ENCODE measurements at regions of chr14 and their contacts with region 1.

Region 1: GRCh38 chr14:68795597-68796417 is 2.9 kb upstream of the ZFP36L1 start:
- DNase-seq: peak; percentile 88 to 93 (median 89)
- H3K4me3 ChIP-seq: peak overlapping the region; percentile 88 to 98
- H3K4me3 Mint-ChIP-seq: peak overlapping the region; percentile 88 to 100 (median 94)
- H3K27ac ChIP-seq: peak overlapping the region; percentile 99
- H3K27ac Mint-ChIP-seq: peak overlapping the region; percentile 98 to 100 (median 99)
- H3K4me1 ChIP-seq: peaks cover 20% of the 10 kb centered on the region
- H3K4me1 Mint-ChIP-seq: peaks cover 22 to 71% (median 29%) of the 10 kb centered on the region in 4 donors
- H3K27me3 ChIP-seq: no peaks in the 10 kb centered on the region
- H3K27me3 Mint-ChIP-seq: peaks cover 0 to 8% of the 10 kb centered on the region in 2 donors

Region 2: GRCh38 chr14:68047906-68048305 is 747.9 kb before region 1 on chr14:
- CTCF ChIA-PET with region 1: no interaction called
- POLR2A ChIA-PET with region 1: no interaction called
- intact Hi-C with region 1: no loop called
- DNase-seq: no peak
- H3K4me3 ChIP-seq: no peak overlapping the region
- H3K4me3 Mint-ChIP-seq: no peak overlapping the region
- H3K27ac ChIP-seq: no peak overlapping the region
- H3K27ac Mint-ChIP-seq: no peak overlapping the region
- H3K4me1 ChIP-seq: no peaks in the 10 kb centered on the region
- H3K4me1 Mint-ChIP-seq: no peaks in the 10 kb centered on the region
- H3K27me3 ChIP-seq: no peaks in the 10 kb centered on the region
- H3K27me3 Mint-ChIP-seq: no peaks in the 10 kb centered on the region

Region 3: DNA sequence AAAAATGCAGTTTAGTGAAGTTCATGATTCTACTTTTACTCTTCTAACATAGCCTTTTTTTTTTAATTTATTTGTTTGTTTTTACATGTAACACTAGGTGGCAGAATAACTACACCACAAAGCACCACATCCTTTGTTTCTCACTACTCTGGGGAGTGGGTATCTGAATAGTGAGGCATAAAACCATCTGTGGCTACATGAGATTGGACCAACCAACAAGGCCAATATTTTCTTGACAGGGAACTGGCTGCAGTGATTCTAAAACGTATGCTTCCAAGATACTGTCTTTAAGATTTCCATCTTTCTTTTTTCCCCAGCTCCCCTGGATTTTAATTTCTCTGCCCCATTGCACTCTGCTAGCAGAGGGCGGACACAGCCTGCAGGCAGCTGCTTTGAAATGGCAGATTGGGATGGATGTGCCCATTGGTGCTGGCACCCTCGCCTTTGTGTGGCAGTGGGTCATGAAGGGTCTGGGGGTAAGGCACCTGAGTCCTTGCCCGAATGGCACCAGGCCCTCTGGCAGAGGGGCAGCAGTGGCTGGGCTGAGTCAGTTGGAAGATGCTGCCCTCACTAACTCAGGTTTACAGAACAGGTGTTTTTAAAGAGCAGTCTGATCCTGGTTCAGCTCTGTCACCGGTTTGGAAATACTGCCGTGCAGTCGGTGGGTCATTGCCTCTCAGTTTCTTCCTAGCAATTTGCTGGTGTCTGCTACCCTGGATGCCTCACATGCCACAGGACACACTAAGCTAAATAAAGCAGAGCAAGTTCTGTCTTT is 547.1 kb before region 1 on chr14:
- CTCF ChIA-PET with region 1: interaction called, 199 read pairs
- POLR2A ChIA-PET with region 1: interaction called, 210 read pairs
- intact Hi-C with region 1: no loop called
- DNase-seq: peak; percentile 43 to 65 (median 62)
- H3K4me3 ChIP-seq: no peak overlapping the region
- H3K4me3 Mint-ChIP-seq: no peak overlapping the region
- H3K27ac ChIP-seq: no peak overlapping the region
- H3K27ac Mint-ChIP-seq: peak overlapping the region in 3 of 7 donors; percentile 55 to 61 (median 61)
- H3K4me1 ChIP-seq: peaks cover 24% of the 10 kb centered on the region
- H3K4me1 Mint-ChIP-seq: peaks cover 12 to 38% (median 24%) of the 10 kb centered on the region in 4 donors
- H3K27me3 ChIP-seq: no peaks in the 10 kb centered on the region
- H3K27me3 Mint-ChIP-seq: no peaks in the 10 kb centered on the region

Region 4: GRCh38 chr14:68377459-68377858 is 418.3 kb before region 1 on chr14:
- CTCF ChIA-PET with region 1: no interaction called
- POLR2A ChIA-PET with region 1: interaction called, 25 read pairs
- intact Hi-C with region 1: no loop called
- DNase-seq: peak in 1 of 5 donors; percentile 10
- H3K4me3 ChIP-seq: no peak overlapping the region
- H3K4me3 Mint-ChIP-seq: peak overlapping the region in 7 of 8 donors; percentile 29 to 74 (median 42)
- H3K27ac ChIP-seq: peak overlapping the region; percentile 16
- H3K27ac Mint-ChIP-seq: peak overlapping the region in 6 of 7 donors; percentile 69 to 94 (median 87)
- H3K4me1 ChIP-seq: peaks cover 68% of the 10 kb centered on the region
- H3K4me1 Mint-ChIP-seq: peaks cover 32 to 70% (median 52%) of the 10 kb centered on the region in 4 donors
- H3K27me3 ChIP-seq: no peaks in the 10 kb centered on the region
- H3K27me3 Mint-ChIP-seq: no peaks in the 10 kb centered on the region

Region 5: DNA sequence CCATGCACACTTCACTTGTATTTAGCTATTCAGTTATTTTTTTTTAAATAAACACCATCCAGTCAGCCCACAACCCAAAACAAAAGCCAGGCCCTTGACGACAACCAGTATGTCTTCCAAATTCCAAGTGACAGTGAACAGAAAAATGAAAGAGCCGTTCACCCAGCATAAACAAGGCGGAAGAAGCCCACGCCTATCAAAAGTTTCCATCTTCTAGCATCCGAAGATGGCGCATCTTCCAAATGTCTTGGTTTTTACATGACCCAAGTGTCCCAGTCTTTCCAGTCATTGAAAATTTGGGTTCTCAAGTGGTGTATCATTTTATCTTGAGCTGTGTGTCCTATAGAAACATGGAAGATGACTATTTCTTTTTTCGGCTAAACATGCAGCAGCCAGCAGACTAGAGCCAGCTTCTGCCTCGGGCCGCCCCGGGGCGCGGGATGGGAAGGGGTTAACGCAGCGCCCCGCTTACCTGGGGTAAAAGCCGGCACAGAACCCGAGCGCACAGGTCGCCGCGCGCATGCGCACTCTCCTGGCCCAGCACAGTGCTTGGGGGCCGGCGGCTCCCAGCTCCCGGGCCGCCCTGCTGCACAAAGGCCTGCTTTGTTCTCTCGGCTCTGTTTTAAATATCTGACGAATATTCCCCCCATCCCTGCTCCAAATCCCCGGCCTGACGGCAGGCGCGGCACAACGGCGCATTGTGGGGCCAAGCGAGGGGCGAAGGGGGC is 167.8 kb before region 1 on chr14:
- CTCF ChIA-PET with region 1: interaction called, 3 read pairs
- POLR2A ChIA-PET with region 1: interaction called, 42 read pairs
- intact Hi-C with region 1: no loop called
- DNase-seq: peak; percentile 34 to 60 (median 47)
- H3K4me3 ChIP-seq: peak overlapping the region in 1 of 2 donors; percentile 41
- H3K4me3 Mint-ChIP-seq: peak overlapping the region; percentile 74 to 88 (median 85)
- H3K27ac ChIP-seq: no peak overlapping the region
- H3K27ac Mint-ChIP-seq: peak overlapping the region; percentile 70 to 94 (median 81)
- H3K4me1 ChIP-seq: peaks cover 10% of the 10 kb centered on the region
- H3K4me1 Mint-ChIP-seq: peaks cover 8 to 25% (median 13%) of the 10 kb centered on the region in 4 donors
- H3K27me3 ChIP-seq: no peaks in the 10 kb centered on the region
- H3K27me3 Mint-ChIP-seq: no peaks in the 10 kb centered on the region

Region 6: DNA sequence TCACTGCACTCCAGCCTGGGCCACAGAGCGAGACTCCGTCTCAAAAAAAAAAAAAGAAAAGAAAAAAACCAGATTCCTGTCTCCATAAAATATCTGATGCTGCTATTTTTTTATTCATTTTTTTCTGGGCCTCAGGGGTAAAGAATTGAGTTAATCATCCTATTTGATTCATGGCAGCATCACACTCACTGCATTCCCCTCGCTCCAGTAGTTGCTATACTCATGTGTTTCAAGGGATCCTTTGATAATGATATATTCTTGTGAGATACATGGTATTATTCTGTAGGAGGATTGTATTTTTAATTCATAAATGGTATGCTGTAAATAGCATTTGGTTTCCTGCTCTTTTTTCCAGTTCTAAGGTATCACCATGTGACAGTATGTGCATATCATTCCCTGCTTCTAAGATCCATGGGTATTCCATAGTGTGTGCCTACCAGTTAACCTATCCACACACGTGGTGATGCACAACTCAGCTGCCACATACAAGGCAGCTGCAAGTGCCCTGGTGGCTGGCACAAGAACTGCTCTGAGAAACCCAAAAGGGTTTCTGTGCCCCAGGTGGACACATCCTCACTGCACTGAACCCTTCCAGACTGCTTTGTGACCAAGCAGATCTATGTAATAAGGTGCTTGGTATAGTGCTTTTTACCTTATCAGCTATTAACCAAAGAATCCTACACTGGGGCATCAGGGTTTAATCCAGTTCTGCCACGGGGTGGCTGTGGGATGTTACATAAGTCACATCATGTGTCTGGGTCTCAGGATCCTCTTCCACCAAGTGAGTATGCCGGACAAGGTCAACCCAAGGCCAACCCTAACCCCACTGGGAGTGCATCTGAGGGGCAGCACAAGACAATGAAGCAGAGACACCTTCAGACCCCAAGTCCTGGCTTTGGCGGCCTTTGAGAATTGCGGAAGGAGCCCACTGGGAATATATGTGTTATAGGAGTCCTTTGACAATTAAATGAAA is 77.5 kb before region 1 on chr14:
- CTCF ChIA-PET with region 1: no interaction called
- POLR2A ChIA-PET with region 1: interaction called, 112 read pairs
- intact Hi-C with region 1: no loop called
- DNase-seq: no peak
- H3K4me3 ChIP-seq: no peak overlapping the region
- H3K4me3 Mint-ChIP-seq: no peak overlapping the region
- H3K27ac ChIP-seq: no peak overlapping the region
- H3K27ac Mint-ChIP-seq: peak overlapping the region in 2 of 7 donors; percentile 11 to 35
- H3K4me1 ChIP-seq: peaks cover 40% of the 10 kb centered on the region
- H3K4me1 Mint-ChIP-seq: peaks cover 29 to 66% (median 40%) of the 10 kb centered on the region in 4 donors
- H3K27me3 ChIP-seq: no peaks in the 10 kb centered on the region
- H3K27me3 Mint-ChIP-seq: no peaks in the 10 kb centered on the region

Region 7: DNA sequence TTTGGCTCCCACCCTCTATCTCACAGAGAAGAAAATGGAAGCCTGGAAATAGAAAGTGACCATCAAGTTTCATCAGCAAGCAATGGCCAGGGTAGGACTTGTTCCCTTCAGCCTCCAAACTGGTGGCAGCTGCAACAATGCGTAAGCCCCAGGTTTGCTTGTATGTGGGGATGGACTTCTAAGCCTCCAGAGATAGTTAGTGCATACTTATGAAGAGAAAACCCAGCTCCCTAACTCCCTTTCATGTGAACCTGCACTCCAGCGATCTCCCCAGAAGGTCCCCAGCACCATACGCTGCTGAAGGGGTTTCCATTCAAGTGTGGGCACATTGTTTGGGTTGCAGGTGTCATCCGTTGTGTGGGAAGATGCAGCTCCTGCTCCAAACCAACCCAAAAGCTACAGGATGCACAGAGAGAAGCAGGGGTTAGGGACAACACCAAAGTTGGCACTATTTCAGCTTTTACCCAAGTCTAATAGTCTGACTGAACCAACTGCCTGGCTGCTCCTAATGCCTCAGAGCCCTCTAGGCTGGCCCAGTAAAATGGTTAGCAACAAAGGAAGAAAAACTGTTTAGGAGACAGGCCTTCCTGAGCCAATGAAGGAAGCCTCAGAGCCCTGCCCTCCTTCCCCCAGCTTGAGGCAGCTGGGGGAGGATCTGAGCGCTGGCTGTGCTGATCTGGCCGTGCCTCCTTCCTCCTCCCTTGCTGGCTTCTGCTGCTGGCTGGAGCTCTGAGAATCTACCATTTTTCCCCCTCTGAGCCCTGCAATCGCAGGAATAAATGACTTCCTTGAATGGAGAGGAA is 15.2 kb before region 1 on chr14:
- CTCF ChIA-PET with region 1: interaction called, 62 read pairs
- POLR2A ChIA-PET with region 1: interaction called, 1,973 read pairs
- intact Hi-C with region 1: no loop called
- DNase-seq: peak in 4 of 5 donors; percentile 27 to 64 (median 38)
- H3K4me3 ChIP-seq: peak overlapping the region in 1 of 2 donors; percentile 49
- H3K4me3 Mint-ChIP-seq: peak overlapping the region; percentile 79 to 93 (median 85)
- H3K27ac ChIP-seq: peak overlapping the region; percentile 58
- H3K27ac Mint-ChIP-seq: peak overlapping the region; percentile 93 to 99 (median 97)
- H3K4me1 ChIP-seq: peaks cover 91% of the 10 kb centered on the region
- H3K4me1 Mint-ChIP-seq: peaks cover 60 to 98% (median 76%) of the 10 kb centered on the region in 4 donors
- H3K27me3 ChIP-seq: no peaks in the 10 kb centered on the region
- H3K27me3 Mint-ChIP-seq: no peaks in the 10 kb centered on the region

Region 8: GRCh38 chr14:69766984-69767368 is 971.2 kb after region 1 on chr14 and contains the start of gene SRSF5:
- CTCF ChIA-PET with region 1: no interaction called
- POLR2A ChIA-PET with region 1: no interaction called
- intact Hi-C with region 1: loop called (anchors 5 kb)
- DNase-seq: peak; percentile 92 to 95 (median 94)
- H3K4me3 ChIP-seq: peak within 1 kb of the TSS; percentile 83 to 95
- H3K4me3 Mint-ChIP-seq: peak within 1 kb of the TSS; percentile 98 to 100 (median 100)
- H3K27ac ChIP-seq: peak within 1 kb of the TSS; percentile 100
- H3K27ac Mint-ChIP-seq: peak within 1 kb of the TSS; percentile 100
- H3K4me1 ChIP-seq: peaks cover 48% of the 10 kb centered on the region
- H3K4me1 Mint-ChIP-seq: peaks cover 41 to 79% (median 57%) of the 10 kb centered on the region in 4 donors
- H3K27me3 ChIP-seq: no peaks in the 10 kb centered on the region
- H3K27me3 Mint-ChIP-seq: no peaks in the 10 kb centered on the region
- total RNA-seq, gene SRSF5: 946 to 964 TPM

Measured in CD4-positive, alpha-beta memory T cell (primary cell).